Sigmoid colon (tissue), 7 donors: ENCODE measurements at regions of chr18 and their contacts with region 1.

Region 1: GRCh38 chr18:23377669-23378301 is 75.3 kb upstream of the RIOK3 start:
- DNase-seq: no peak
- H3K4me3 ChIP-seq: no peak overlapping the region
- H3K27ac ChIP-seq: peak overlapping the region; percentile 59 to 83 (median 75)
- H3K4me1 ChIP-seq: peaks cover 0 to 20% (median 15%) of the 10 kb centered on the region in 4 donors
- H3K27me3 ChIP-seq: no peaks in the 10 kb centered on the region
- CTCF ChIP-seq: no peak
- EP300 ChIP-seq: no peak
- POLR2A ChIP-seq: no peak

Region 2: DNA sequence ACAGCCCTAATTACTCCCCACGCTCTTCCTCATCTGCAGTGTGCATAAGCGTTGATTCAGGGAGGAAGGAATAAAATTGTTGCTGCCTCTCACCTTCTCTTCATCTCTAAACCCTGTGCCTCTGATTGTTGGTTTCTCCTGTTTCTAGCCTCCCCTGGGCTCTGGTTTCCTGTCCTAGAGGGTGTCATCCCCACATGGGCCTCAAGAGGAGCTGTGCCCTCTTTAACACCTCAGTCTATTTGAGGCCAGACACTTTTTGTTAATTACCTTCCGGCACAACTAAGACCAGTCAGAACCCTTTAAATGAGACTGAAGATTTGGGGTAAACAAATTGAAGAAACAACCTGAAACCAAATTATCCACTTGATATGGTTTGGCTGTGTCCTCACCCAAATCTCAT is 969.7 kb before region 1 on chr18:
- intact Hi-C with region 1: no loop called
- DNase-seq: no peak
- H3K4me3 ChIP-seq: no peak overlapping the region
- H3K27ac ChIP-seq: no peak overlapping the region
- H3K4me1 ChIP-seq: no peaks in the 10 kb centered on the region
- H3K27me3 ChIP-seq: no peaks in the 10 kb centered on the region
- CTCF ChIP-seq: no peak
- EP300 ChIP-seq: no peak
- POLR2A ChIP-seq: no peak

Region 3: DNA sequence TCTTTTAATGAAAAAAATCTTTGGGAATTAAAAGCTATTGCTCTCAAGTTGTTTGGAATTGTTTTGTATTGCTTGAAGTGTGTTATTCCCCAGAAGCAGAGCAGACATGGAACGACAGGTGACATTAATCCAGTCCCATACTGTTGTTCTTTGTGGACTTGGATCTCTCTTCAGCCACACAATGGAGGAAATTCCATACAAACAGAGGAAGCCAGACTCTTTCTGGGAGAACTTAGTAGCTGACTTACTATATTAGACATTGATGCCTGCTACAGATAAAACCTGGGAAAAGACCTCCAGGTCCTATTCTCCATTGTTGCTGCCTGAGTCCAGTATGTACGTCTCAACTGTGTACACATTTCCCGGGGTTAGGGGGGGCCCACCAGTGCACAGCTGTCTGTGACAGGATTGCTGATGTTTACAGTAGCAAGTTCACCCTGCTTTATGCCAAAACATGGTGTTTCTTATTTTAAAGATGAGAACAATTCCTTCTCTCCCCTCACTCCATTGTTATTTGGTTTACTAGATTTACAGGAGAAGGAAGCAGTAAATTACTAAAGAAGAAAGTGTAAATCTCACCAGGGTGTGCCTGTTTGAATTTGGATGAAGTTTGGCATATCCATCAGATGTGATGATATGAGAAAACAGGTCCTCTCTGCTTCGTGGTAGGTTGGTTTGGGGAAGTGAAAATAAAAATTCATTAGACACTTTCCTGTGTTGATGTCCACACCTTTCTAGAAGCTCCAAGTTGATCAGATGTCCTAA is 587.1 kb before region 1 on chr18:
- intact Hi-C with region 1: loop called (anchors 10 kb)
- DNase-seq: no peak
- H3K4me3 ChIP-seq: no peak overlapping the region
- H3K27ac ChIP-seq: no peak overlapping the region
- H3K4me1 ChIP-seq: no peaks in the 10 kb centered on the region
- H3K27me3 ChIP-seq: no peaks in the 10 kb centered on the region
- CTCF ChIP-seq: no peak
- EP300 ChIP-seq: no peak
- POLR2A ChIP-seq: no peak

Region 4: DNA sequence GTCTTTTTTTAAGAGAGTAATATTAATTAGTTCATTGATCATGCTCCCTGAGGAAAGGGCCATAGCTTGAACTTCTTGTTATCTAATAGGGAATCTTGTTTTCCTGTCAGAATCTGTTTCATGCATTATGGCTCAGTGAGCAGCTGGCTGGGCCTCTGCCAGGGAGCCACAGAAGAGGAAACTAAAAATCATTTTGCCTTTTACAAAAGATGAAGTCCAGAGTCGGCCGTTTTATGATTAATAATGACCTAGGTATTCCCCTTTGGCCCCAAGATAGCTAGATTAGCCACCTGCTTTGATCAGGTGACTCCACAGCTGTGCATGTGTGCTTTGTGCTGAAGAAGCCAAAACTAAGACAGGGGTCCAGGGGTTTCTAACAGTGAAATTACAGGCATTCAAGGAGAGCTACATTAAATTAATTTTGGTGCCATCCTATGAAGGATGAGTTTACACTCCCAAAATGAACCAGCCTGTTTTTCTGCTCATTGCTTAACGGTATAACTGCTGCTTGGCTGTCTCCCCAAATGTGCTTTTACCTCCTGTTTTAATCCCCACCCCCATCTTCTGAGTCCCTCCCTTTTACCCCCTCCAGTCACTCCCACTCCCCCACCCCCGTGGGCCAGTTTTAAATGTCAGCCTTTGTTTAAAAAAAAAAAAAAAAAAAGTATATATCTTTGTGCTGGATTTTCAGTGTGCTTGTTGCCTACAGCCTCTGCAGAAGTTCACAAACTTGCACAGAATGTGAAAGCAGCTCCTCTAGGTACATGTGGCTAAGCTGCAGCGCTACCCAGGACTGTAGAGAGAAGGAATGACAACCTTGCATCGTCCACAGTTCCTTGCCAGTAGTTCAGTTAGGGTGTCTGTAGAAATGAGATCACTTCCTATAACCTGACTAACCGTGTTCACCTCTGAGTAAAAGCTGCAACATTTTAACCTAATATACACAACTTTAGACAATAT is 149.4 kb before region 1 on chr18:
- intact Hi-C with region 1: loop called (anchors 2 kb)
- DNase-seq: no peak
- H3K4me3 ChIP-seq: no peak overlapping the region
- H3K27ac ChIP-seq: peak overlapping the region; percentile 67 to 82 (median 77)
- H3K4me1 ChIP-seq: peaks cover 0 to 61% (median 52%) of the 10 kb centered on the region in 4 donors
- H3K27me3 ChIP-seq: no peaks in the 10 kb centered on the region
- CTCF ChIP-seq: no peak
- EP300 ChIP-seq: no peak
- POLR2A ChIP-seq: no peak